Activated T-helper 1 cell treated with anti-CD3 and anti-CD28 coated beads, Interleukin-12 subunit alpha, Interleukin-12 subunit beta, Interleukin-2, Interleukin-4 antibody, amounts not matched to agents 30 ng/mL and 10 ng/mL and 1 ng/mL, durations not matched to agents 14 hours and 24 hours and 36 hours (primary cell): ENCODE measurements at regions of chr6 and their contacts with region 1.

Region 1: GRCh38 chr6:90080876-90081481 is 186.7 kb downstream of the GJA10 start:
- DNase-seq: peak; percentile 76
- H3K4me3 Mint-ChIP-seq: peak overlapping the region; percentile 88
- H3K27ac Mint-ChIP-seq: peak overlapping the region; percentile 95
- H3K4me1 Mint-ChIP-seq: peaks cover 96% of the 10 kb centered on the region
- H3K27me3 Mint-ChIP-seq: no peaks in the 10 kb centered on the region

Region 2: GRCh38 chr6:89940225-89941027 is 140.6 kb before region 1 on chr6:
- intact Hi-C with region 1: loop called (anchors 1 kb)
- DNase-seq: peak; percentile 57
- H3K4me3 Mint-ChIP-seq: no peak overlapping the region
- H3K27ac Mint-ChIP-seq: no peak overlapping the region
- H3K4me1 Mint-ChIP-seq: peaks cover 25% of the 10 kb centered on the region
- H3K27me3 Mint-ChIP-seq: no peaks in the 10 kb centered on the region

Region 3: GRCh38 chr6:90049295-90049694 is 31.7 kb before region 1 on chr6:
- intact Hi-C with region 1: loop called (anchors 2 kb)
- DNase-seq: no peak
- H3K4me3 Mint-ChIP-seq: no peak overlapping the region
- H3K27ac Mint-ChIP-seq: peak overlapping the region; percentile 76
- H3K4me1 Mint-ChIP-seq: peaks cover 26% of the 10 kb centered on the region
- H3K27me3 Mint-ChIP-seq: no peaks in the 10 kb centered on the region

Region 4: DNA sequence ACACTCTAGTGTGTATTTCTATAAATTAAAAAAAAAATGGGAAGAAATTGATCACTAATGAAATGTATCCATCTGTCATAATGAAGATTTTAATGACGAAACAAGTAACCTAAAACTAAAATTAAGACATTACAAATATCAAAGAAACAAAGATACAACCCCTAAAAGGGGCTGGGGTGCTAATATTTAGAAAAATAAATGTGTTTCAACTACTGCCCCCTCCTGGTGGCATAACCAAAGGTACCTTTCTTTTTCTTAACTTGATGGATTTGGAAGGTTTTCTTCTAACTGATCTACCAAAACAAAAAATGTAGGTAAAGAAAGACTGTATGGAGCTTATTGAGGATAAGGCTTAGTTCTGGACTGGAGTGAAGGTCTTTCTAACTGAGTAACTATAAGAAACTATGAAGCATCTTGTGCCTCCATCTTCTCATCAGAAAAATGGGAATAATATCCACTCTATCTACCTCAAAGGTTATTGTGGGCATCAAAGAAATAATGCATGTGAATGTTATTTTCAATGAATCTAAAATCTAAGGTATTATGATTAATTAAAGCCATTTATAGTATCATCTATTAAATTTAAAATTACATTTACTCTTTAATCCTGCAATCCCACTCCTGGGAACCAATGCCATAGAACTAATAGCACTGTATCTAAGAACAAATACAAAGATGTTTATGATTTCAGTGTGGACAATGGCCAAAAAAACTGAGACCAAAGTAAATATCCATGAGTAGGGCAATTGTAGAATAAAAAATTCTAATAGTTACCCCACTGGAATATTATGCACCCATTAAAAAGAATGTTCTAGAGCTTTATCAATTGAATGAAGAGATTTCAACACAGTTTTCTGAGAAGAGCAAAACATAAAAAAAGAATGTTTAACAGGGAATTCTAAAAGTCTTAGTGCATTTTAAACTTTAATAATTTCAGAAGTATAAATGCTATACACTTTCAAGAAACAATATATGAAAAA is 98.5 kb after region 1 on chr6:
- intact Hi-C with region 1: loop called (anchors 1 kb)
- DNase-seq: no peak
- H3K4me3 Mint-ChIP-seq: no peak overlapping the region
- H3K27ac Mint-ChIP-seq: no peak overlapping the region
- H3K4me1 Mint-ChIP-seq: peaks cover 69% of the 10 kb centered on the region
- H3K27me3 Mint-ChIP-seq: no peaks in the 10 kb centered on the region

Region 5: GRCh38 chr6:90251295-90251992 is 170.5 kb after region 1 on chr6:
- intact Hi-C with region 1: loop called (anchors 1 kb)
- DNase-seq: no peak
- H3K4me3 Mint-ChIP-seq: peak overlapping the region; percentile 34
- H3K27ac Mint-ChIP-seq: peak overlapping the region; percentile 90
- H3K4me1 Mint-ChIP-seq: peaks cover 84% of the 10 kb centered on the region
- H3K27me3 Mint-ChIP-seq: peaks cover 2% of the 10 kb centered on the region

Region 6: GRCh38 chr6:90425161-90425641 is 344.2 kb after region 1 on chr6:
- intact Hi-C with region 1: loop called (anchors 1 kb)
- DNase-seq: no peak
- H3K4me3 Mint-ChIP-seq: peak overlapping the region; percentile 68
- H3K27ac Mint-ChIP-seq: peak overlapping the region; percentile 87
- H3K4me1 Mint-ChIP-seq: peaks cover 26% of the 10 kb centered on the region
- H3K27me3 Mint-ChIP-seq: no peaks in the 10 kb centered on the region

Region 7: DNA sequence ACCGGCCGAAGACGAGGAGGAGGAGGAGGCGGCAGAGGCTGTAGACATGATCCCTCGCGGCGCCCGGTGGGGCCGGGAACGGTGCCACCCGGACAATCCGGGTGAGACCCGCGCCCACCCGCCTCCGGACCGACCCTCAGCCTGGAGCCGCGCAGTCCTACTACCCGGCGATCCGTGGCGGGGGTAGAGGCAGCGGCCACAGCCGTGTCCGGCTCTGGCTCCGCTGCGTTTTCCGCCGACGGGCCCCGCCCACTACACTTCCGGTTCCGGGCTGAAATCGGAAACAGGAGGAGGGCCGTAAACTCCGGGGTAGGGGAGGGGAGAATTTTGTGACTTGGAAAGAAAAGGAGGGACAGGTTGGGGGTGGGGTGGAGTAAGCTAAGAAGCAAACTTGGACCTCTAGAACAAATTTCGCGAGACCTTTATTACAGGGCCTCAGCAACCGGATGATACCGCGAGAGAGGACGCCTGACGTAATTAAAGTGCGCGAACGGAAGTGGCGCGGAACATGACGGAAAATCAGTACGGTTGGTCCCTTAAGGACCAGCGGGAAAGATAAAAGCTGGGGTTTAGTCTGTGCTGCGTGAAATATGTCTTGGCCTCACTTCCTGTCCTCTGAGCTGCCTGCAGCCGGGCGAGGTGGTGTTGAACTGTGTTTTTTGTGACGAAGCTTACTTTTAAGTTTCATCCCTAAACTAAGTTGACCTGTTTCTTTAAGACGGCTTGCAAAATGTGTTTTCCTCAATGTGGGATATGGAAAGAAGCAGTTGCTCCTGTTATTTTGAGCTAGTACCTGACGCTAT is 506.1 kb after region 1 on chr6 and contains the start of gene MAP3K7:
- intact Hi-C with region 1: loop called (anchors 2 kb)
- DNase-seq: peak; percentile 92
- H3K4me3 Mint-ChIP-seq: peak within 1 kb of the TSS; percentile 93
- H3K27ac Mint-ChIP-seq: peak within 1 kb of the TSS; percentile 96
- H3K4me1 Mint-ChIP-seq: peaks cover 39% of the 10 kb centered on the region
- H3K27me3 Mint-ChIP-seq: peaks cover 8% of the 10 kb centered on the region
- total RNA-seq, gene MAP3K7: 31.0 and 35.9 TPM in 2 replicates